Cardiac septum (tissue), 1 donor: ENCODE measurements at regions of chr2 and their contacts with region 1.

Region 1: DNA sequence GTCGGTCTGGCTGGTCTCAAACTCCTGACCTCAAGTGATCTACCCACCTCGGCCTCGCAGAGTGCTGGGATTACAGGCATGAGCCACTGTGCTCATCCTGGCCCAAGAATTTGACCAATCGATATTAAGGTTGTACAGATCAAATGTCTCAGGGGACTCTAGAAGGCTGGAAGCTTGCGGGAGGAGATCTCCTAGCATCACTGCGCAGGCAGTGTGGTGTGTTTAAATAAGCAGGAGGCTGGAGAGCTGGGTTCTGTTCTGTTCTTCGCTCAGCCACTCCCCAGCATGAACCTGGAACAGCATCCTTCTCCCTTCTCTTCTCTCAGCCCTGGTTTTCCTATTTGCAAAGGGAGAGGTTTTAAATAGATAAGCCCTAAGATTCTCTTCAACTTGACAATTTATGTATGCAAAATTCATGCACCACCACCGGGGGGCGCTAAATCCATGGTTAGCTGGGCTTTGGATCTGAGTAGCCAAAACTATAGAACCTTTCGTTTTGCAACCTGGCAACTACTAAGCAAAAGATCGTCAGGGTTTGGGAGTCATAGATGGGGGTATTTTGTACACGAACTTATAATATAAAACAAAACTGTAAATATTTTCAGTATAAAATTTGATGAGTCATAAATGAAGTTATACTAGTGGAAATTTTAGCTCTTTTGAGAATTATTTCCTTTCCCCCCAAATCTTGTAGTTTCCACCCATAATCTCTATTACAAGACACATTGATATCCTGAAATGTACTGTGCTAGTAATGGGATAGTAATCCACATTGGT is 60.6 kb downstream of the SLC16A14 start:
- DNase-seq: peak; percentile 82

Region 2: DNA sequence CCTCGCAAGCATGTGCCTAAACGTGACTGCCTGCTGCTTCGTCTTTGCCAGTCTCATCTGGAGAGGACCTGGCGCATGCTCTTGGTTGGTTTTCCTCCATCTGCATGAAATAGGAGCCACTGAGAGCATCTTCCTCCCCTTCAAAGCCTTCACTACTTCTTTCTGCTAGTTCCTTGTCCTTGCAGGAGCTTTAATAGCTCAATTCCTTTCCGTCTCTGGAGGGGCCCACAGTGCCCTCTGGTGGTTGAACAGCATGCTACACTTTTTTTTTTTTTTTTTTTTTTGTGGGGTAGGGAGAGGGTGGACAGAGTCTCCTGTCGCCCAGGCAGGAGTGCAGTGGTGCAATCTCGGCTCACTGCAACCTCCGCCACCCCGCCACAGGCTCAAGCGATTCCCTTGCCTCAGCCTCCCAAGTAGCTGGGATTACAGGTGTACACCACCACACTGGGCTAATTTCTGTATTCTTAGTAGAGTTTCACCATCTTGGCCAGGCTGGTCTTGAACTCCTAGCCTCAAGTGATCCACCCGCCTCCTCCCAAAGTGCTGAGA is 152.1 kb after region 1 on chr2:
- intact Hi-C with region 1: loop called (anchors 2 kb)
- DNase-seq: no peak

Region 3: GRCh38 chr2:230614913-230615332 is 606.8 kb after region 1 on chr2:
- intact Hi-C with region 1: loop called (anchors 5 kb)
- DNase-seq: no peak